Sciatic nerve (tissue), 2 donors: ENCODE measurements at regions of chr5 and their contacts with region 1.

Region 1: GRCh38 chr5:122424132-122424531 is 112.1 kb downstream of the SNCAIP start:
- DNase-seq: no peak
- ATAC-seq: peak; percentile 28

Region 2: GRCh38 chr5:121573721-121574382 is 850.3 kb before region 1 on chr5:
- intact Hi-C with region 1: no loop called
- DNase-seq: no peak
- ATAC-seq: no peak

Region 3: DNA sequence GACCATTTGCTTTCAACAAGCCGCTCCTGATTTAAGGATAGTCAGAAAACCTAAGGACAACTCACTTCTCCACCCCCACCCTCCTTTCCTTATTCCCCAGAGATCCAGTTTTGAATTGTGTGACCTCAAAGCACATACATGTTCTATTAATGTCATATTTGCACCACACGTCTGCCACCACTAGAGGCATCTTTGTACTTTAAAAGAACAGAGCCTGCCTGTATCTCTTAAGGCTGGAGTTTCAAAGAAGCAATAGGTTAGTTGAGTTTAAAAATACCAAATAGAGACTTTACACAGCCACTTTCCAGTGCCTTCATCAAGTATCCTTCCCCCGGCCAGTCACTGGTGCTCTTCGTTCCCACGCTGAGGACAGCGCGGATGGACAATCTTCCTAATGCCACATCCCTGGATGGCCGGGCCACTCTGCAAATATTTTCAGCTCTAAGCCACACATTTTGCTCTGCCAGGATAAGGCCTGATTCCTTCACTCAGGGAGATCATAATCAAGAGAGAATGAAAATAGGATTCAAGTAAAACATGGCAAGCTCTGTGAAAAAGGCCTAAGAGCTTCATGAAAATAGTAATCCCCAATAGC is 34.2 kb after region 1 on chr5:
- intact Hi-C with region 1: loop called (anchors 1 kb)
- DNase-seq: no peak
- ATAC-seq: no peak